Heart right ventricle (tissue), 16 donors: ENCODE measurements at regions of chrX and their contacts with region 1.

Region 1: GRCh38 chrX:1444561-1445500 is 7.9 kb downstream of the ASMTL start:
- DNase-seq: no peak
- ATAC-seq: no peak
- H3K4me3 ChIP-seq: no peak overlapping the region
- H3K27ac ChIP-seq: no peak overlapping the region
- H3K4me1 ChIP-seq: no peaks in the 10 kb centered on the region
- H3K27me3 ChIP-seq: no peaks in the 10 kb centered on the region
- CTCF ChIP-seq: no peak

Region 2: GRCh38 chrX:1249101-1249887 is 195.5 kb before region 1 on chrX:
- intact Hi-C with region 1: no loop called
- DNase-seq: peak; percentile 42 to 64
- ATAC-seq: peak; percentile 72 to 88 (median 82)
- H3K4me3 ChIP-seq: peak overlapping the region in 6 of 10 donors; percentile 24 to 37 (median 28)
- H3K27ac ChIP-seq: peak overlapping the region in 8 of 10 donors; percentile 35 to 91 (median 64)
- H3K4me1 ChIP-seq: peaks cover 5 to 20% (median 16%) of the 10 kb centered on the region in 9 donors
- H3K27me3 ChIP-seq: peaks cover 0 to 20% (median 0%) of the 10 kb centered on the region in 7 donors
- CTCF ChIP-seq: no peak

Region 3: DNA sequence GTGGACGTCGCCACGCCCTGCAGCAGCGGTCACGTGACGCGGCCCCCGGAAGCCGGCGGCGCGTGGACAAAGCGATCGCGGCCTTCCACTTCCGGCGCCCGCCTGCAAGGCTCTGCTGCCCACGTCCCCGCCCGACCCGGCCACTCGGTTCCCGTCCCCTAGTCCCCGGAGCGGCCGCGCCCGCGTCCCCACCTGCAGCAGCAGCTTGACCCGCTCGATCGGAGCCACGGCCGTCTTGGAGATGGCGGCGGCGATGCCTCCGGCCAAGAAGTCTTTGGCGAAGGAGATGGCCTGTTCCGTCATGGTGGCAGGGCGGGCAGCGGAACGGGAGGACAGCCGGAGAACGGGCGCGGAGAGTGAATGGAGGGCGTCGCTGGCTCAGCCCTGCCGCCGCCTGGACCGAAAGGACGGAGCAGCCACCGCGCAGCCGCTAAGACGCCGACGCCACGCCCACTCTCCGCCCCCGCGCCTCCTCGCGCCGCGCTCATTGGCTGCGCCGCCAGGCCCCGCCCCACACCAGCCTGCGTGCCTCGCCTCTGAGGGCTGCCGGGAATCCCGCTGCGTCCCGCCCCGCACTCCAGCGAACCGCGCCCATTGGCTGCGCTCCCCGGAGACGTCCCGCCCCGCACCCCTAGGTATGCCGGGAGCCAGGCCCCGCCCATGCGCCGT is 53.0 kb before region 1 on chrX and contains the start of gene SLC25A6:
- intact Hi-C with region 1: loop called in 5 of 10 experiments (anchors 5 to 10 kb)
- DNase-seq: peak; percentile 99 to 100
- ATAC-seq: peak; percentile 93 to 97 (median 96)
- H3K4me3 ChIP-seq: peak within 1 kb of the TSS; percentile 75 to 100 (median 97)
- H3K27ac ChIP-seq: peak within 1 kb of the TSS; percentile 86 to 100 (median 99)
- H3K4me1 ChIP-seq: peaks cover 18 to 65% (median 42%) of the 10 kb centered on the region in 9 donors
- H3K27me3 ChIP-seq: no peaks in the 10 kb centered on the region
- CTCF ChIP-seq: peak in 5 of 9 donors; percentile 20 to 42 (median 28)
- total RNA-seq, gene SLC25A6: 128 to 186 (median 141) TPM

Region 4: DNA sequence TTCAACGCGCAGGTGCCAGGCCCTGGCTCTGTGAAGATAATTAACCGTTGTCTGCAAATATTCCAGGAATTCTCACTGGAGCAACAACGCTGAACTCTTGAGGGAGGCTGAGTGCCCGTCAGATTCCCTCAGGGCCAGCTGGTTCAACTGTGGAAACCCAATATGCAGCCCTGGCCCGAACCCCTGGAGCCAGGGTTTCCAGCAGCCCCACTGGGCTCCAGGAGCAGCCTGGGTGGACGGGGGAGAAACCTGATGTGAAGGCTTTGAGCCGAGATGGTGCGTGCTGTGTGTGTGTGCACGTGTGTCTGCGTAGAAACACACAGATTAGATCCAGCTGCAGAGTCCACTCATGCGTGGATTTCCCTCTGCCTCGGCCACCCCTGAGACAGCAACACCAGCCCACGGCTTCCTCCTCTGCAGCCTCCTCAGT is 33.5 kb before region 1 on chrX:
- intact Hi-C with region 1: loop called in 1 of 10 experiments (anchors 5 kb)
- DNase-seq: no peak
- ATAC-seq: peak in 1 of 8 donors; percentile 40
- H3K4me3 ChIP-seq: no peak overlapping the region
- H3K27ac ChIP-seq: no peak overlapping the region
- H3K4me1 ChIP-seq: no peaks in the 10 kb centered on the region
- H3K27me3 ChIP-seq: no peaks in the 10 kb centered on the region
- CTCF ChIP-seq: no peak

Region 5: DNA sequence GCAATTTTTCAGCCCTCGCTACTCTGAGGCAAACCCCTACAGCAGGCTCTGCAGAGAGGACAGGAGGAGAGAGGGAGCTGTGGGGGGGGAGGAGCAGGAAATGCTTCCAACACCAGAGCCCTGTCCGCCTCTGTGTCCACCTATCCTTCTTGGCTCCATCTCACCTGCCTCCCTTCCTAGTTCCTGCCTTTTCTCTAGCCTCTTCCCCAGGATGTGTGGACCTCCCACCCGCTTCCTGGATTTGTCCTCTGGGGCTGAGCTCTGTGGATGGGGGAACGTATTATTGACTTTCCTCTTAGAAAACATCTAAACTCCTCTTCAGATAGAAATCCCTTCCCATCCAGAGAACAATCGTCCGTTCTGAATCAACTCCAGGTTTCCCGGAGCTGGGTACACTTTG is 184.4 kb after region 1 on chrX:
- intact Hi-C with region 1: no loop called
- DNase-seq: no peak
- ATAC-seq: peak in 2 of 8 donors; percentile 59 to 64
- H3K4me3 ChIP-seq: no peak overlapping the region
- H3K27ac ChIP-seq: peak overlapping the region in 1 of 10 donors; percentile 5
- H3K4me1 ChIP-seq: peaks cover 0 to 9% (median 0%) of the 10 kb centered on the region in 9 donors
- H3K27me3 ChIP-seq: no peaks in the 10 kb centered on the region
- CTCF ChIP-seq: no peak